CD14-positive monocyte (primary cell): ENCODE measurements at regions of chr20 and their contacts with region 1.

Region 1: GRCh38 chr20:49713753-49714712 is at the start of gene B4GALT5:
- DNase-seq: peak; percentile 42 to 57 (median 52)
- H3K4me3 ChIP-seq: peak within 1 kb of the TSS; percentile 91 to 99 (median 97)
- H3K4me3 Mint-ChIP-seq: peak within 1 kb of the TSS; percentile 94 to 95
- H3K27ac ChIP-seq: peak within 1 kb of the TSS; percentile 89 to 93
- H3K27ac Mint-ChIP-seq: peak within 1 kb of the TSS; percentile 89 to 96 (median 94)
- H3K4me1 ChIP-seq: peaks cover 42 to 61% of the 10 kb centered on the region in 2 donors
- H3K4me1 Mint-ChIP-seq: peaks cover 59% of the 10 kb centered on the region
- H3K27me3 ChIP-seq: no peaks in the 10 kb centered on the region
- H3K27me3 Mint-ChIP-seq: peaks cover 0 to 7% (median 3%) of the 10 kb centered on the region in 3 donors
- CTCF ChIP-seq: no peak
- polyA plus RNA-seq, gene B4GALT5: 2.4 to 18.3 (median 2.7) TPM

Region 2: GRCh38 chr20:49676581-49677291 is 37.3 kb before region 1 on chr20:
- intact Hi-C with region 1: loop called (anchors 5 kb)
- DNase-seq: peak; percentile 62 to 76 (median 74)
- H3K4me3 ChIP-seq: peak overlapping the region in 1 of 3 experiments; percentile 37
- H3K4me3 Mint-ChIP-seq: peak overlapping the region in 1 of 2 donors; percentile 59
- H3K27ac ChIP-seq: peak overlapping the region; percentile 69 to 80
- H3K27ac Mint-ChIP-seq: peak overlapping the region; percentile 91 to 97 (median 92)
- H3K4me1 ChIP-seq: peaks cover 68 to 69% of the 10 kb centered on the region in 2 donors
- H3K4me1 Mint-ChIP-seq: peaks cover 76% of the 10 kb centered on the region
- H3K27me3 ChIP-seq: no peaks in the 10 kb centered on the region
- H3K27me3 Mint-ChIP-seq: peaks cover 0 to 2% (median 0%) of the 10 kb centered on the region in 3 donors
- CTCF ChIP-seq: no peak

Region 3: DNA sequence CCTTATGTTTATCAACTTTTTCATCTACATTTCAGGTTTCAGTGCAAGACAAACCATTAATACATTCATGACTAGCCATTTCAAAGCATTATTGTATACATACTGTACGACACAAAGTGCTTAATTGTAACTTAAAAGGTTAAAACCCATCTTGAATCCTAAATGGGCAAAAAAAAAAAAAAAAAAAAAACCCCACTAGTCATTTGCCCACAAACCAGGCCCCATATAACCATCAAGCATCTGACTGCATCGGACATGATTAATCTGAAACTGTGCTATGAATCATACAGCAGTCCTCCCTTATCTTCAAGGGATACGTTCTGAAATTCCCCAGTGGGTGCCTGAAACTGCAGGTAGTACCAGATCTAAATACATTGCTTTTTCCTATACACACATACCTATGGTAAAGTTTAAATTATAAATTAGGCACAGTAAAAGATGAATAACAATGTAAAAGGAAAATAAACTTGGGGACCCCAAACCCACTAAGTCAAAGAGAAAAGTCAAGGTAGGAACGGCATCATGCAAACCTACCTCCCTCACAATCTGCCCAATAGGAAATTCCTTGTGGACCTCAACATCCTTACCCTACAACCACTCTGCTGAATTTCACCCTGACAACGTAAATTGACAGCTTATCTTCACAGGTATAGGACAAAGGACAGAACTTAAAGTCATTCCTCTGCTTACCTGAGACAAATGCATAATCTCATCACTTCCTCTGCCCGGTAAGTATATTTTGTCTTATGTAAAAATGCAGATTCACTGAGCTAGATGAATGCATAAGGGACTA is 14.6 kb before region 1 on chr20:
- intact Hi-C with region 1: no loop called
- DNase-seq: peak; percentile 50 to 85 (median 71)
- H3K4me3 ChIP-seq: no peak overlapping the region
- H3K4me3 Mint-ChIP-seq: no peak overlapping the region
- H3K27ac ChIP-seq: peak overlapping the region in 1 of 2 donors; percentile 80
- H3K27ac Mint-ChIP-seq: peak overlapping the region in 6 of 7 donors; percentile 64 to 93 (median 86)
- H3K4me1 ChIP-seq: peaks cover 29 to 51% of the 10 kb centered on the region in 2 donors
- H3K4me1 Mint-ChIP-seq: peaks cover 68% of the 10 kb centered on the region
- H3K27me3 ChIP-seq: no peaks in the 10 kb centered on the region
- H3K27me3 Mint-ChIP-seq: peaks cover 0 to 1% (median 1%) of the 10 kb centered on the region in 3 donors
- CTCF ChIP-seq: no peak

Region 4: DNA sequence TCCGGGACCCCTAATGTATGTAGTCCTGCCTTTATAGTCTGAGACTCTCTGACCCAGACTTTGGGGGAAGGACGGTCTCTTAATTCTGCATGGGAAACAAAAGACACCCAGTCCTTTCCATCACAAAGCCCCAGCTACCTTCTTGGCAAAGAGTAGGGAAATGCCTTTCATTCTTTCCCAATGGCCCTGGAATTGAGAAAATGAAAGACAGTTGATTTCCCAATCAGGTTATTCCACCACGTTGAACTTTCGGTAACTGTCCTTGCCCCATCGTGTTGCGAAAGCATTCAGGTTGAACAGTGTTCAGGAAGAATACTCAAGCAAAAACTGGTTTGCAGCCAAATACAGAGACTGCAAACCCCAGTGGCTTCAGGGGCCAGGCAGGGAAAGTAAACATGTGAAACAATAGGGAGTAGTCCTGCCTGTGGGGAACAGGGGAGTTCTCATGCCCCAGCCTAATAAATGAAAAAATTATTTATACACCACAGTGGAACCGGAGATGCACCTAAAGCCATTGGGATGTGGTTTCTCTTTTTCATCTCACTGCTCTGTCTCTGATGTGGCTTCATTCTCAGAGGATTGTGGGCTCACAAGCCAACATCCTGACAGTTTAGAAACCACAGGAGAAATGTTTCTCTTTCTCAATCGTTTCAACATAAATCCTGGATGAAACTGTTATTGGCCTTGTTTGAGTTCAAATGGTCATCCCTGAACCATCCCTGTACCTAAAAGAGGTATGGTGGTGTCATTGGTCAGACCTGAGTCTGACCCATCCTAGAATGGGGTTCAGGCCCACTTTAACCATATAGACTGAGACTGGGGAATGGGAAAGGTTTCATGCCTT is 54.4 kb after region 1 on chr20:
- intact Hi-C with region 1: loop called (anchors 5 to 10 kb)
- DNase-seq: peak; percentile 78 to 96 (median 95)
- H3K4me3 ChIP-seq: peak overlapping the region in 1 of 3 experiments; percentile 63
- H3K4me3 Mint-ChIP-seq: peak overlapping the region; percentile 47 to 86
- H3K27ac ChIP-seq: peak overlapping the region; percentile 66 to 79
- H3K27ac Mint-ChIP-seq: peak overlapping the region; percentile 90 to 98 (median 95)
- H3K4me1 ChIP-seq: peaks cover 82 to 83% of the 10 kb centered on the region in 2 donors
- H3K4me1 Mint-ChIP-seq: peaks cover 78% of the 10 kb centered on the region
- H3K27me3 ChIP-seq: no peaks in the 10 kb centered on the region
- H3K27me3 Mint-ChIP-seq: peaks cover 0 to 5% (median 2%) of the 10 kb centered on the region in 3 donors
- CTCF ChIP-seq: no peak

Region 5: DNA sequence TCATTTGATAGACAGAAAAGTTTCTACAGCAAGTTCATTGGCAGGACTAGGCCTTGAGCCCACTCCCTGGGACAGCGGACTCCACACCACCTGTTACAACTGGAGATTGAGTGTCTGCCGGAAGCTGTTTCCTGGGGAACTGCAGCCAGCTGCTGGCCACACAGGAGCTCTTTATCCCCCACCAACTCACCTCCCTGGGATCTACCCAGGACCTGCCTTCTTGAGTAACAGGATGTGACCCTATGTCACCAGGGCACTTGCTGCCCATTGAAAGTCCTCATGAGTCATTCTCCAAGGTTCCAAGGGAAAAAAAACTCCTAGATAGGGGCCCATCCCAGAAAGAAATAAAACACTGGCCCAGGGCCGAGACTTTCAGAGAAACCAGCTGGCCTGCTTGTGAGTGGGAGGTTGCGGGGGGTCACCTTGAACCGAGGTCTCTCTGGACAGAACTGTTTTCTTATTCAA is 61.2 kb after region 1 on chr20:
- intact Hi-C with region 1: loop called in 1 of 2 experiments (anchors 10 kb)
- DNase-seq: peak in 2 of 3 donors; percentile 75 to 93
- H3K4me3 ChIP-seq: no peak overlapping the region
- H3K4me3 Mint-ChIP-seq: no peak overlapping the region
- H3K27ac ChIP-seq: peak overlapping the region; percentile 3 to 9
- H3K27ac Mint-ChIP-seq: peak overlapping the region; percentile 53 to 87 (median 76)
- H3K4me1 ChIP-seq: peaks cover 42 to 46% of the 10 kb centered on the region in 2 donors
- H3K4me1 Mint-ChIP-seq: peaks cover 51% of the 10 kb centered on the region
- H3K27me3 ChIP-seq: no peaks in the 10 kb centered on the region
- H3K27me3 Mint-ChIP-seq: no peaks in the 10 kb centered on the region
- CTCF ChIP-seq: no peak

Region 6: GRCh38 chr20:49785852-49786175 is 71.8 kb after region 1 on chr20:
- intact Hi-C with region 1: loop called in 1 of 2 experiments (anchors 5 kb)
- DNase-seq: peak; percentile 53 to 76 (median 72)
- H3K4me3 ChIP-seq: peak overlapping the region; percentile 27 to 68 (median 33)
- H3K4me3 Mint-ChIP-seq: peak overlapping the region; percentile 68 to 91
- H3K27ac ChIP-seq: peak overlapping the region; percentile 56 to 60
- H3K27ac Mint-ChIP-seq: peak overlapping the region; percentile 83 to 95 (median 91)
- H3K4me1 ChIP-seq: peaks cover 44 to 49% of the 10 kb centered on the region in 2 donors
- H3K4me1 Mint-ChIP-seq: peaks cover 49% of the 10 kb centered on the region
- H3K27me3 ChIP-seq: no peaks in the 10 kb centered on the region
- H3K27me3 Mint-ChIP-seq: peaks cover 1 to 8% (median 2%) of the 10 kb centered on the region in 3 donors
- CTCF ChIP-seq: no peak

Region 7: GRCh38 chr20:49812463-49813304 is 98.7 kb after region 1 on chr20 and contains the start of gene SLC9A8:
- intact Hi-C with region 1: loop called (anchors 5 kb)
- DNase-seq: peak; percentile 98 to 100 (median 98)
- H3K4me3 ChIP-seq: peak within 1 kb of the TSS; percentile 76 to 98 (median 97)
- H3K4me3 Mint-ChIP-seq: peak within 1 kb of the TSS; percentile 90 to 94
- H3K27ac ChIP-seq: peak within 1 kb of the TSS; percentile 95 to 99
- H3K27ac Mint-ChIP-seq: peak within 1 kb of the TSS; percentile 99
- H3K4me1 ChIP-seq: peaks cover 28 to 40% of the 10 kb centered on the region in 2 donors
- H3K4me1 Mint-ChIP-seq: peaks cover 51% of the 10 kb centered on the region
- H3K27me3 ChIP-seq: no peaks in the 10 kb centered on the region
- H3K27me3 Mint-ChIP-seq: peaks cover 0 to 5% (median 0%) of the 10 kb centered on the region in 3 donors
- CTCF ChIP-seq: peak; percentile 16
- polyA plus RNA-seq, gene SLC9A8: 3.0 to 14.6 (median 3.3) TPM

Region 8: GRCh38 chr20:49938173-49939163 is 224.4 kb after region 1 on chr20:
- intact Hi-C with region 1: no loop called
- DNase-seq: no peak
- H3K4me3 ChIP-seq: peak overlapping the region in 1 of 3 experiments; percentile 93
- H3K4me3 Mint-ChIP-seq: no peak overlapping the region
- H3K27ac ChIP-seq: peak overlapping the region in 1 of 2 donors; percentile 90
- H3K27ac Mint-ChIP-seq: peak overlapping the region in 6 of 7 donors; percentile 46 to 95 (median 55)
- H3K4me1 ChIP-seq: peaks cover 45 to 51% of the 10 kb centered on the region in 2 donors
- H3K4me1 Mint-ChIP-seq: peaks cover 51% of the 10 kb centered on the region
- H3K27me3 ChIP-seq: no peaks in the 10 kb centered on the region
- H3K27me3 Mint-ChIP-seq: peaks cover 0 to 2% (median 0%) of the 10 kb centered on the region in 3 donors
- CTCF ChIP-seq: no peak